ENCODE measurements at regions of chr4 and their contacts with region 1.

Region 1: DNA sequence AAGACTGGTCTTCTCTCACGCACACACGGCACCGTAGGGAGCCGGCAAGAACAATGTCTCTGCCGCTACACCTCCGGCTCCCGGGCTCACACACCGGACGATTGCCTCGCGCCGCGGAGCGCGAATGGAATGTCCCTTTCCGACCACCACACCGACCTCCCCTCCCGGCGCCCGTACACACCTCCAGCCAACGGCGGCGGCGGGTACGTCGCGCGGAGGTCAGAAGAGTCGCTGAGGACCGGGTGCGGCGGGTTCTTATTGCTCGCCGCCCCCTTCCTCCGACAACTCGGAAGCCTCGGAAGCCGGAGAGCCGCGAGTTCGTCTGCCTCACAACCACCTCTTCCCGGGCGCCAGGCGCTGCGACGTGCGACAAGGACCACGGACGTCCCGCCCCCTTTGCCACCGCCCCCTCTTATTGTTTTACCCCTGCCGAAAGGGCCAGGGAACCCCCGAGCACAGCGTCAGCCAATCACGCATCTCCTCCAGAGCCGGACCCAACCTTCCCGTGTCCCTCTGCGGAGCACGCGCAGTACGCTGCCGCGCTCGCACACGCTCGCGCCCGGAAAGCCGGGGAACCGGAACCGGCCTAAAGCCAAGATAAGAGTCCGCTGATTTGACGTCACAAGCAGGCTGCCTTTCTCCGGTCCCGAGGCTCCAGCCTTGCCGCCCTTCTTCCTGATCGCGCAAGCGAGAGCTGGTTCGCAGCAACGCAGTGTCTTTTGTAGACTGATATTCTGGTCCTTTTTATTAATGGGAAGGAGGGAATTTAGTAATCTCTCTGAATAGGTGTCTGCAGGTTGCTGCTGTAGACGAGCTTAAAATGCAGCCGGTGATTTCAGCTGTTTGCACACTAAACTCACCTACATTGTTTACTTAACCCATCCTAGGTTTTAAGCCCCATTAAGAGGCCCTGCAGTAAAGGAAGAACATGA is at the start of gene G3BP2:
- DNase-seq: peak; percentile 92 to 100
- ATAC-seq: peak; percentile 92 to 98 (median 94)
- H3K4me3 ChIP-seq: peak within 1 kb of the TSS; percentile 74
- H3K4me3 Mint-ChIP-seq: peak within 1 kb of the TSS; percentile 98
- H3K27ac ChIP-seq: peak within 1 kb of the TSS; percentile 94
- H3K27ac Mint-ChIP-seq: peak within 1 kb of the TSS; percentile 98 to 99
- H3K4me1 ChIP-seq: peaks cover 6% of the 10 kb centered on the region
- H3K4me1 Mint-ChIP-seq: peaks cover 48 to 54% of the 10 kb centered on the region in 2 donors
- H3K27me3 ChIP-seq: no peaks in the 10 kb centered on the region
- H3K27me3 Mint-ChIP-seq: no peaks in the 10 kb centered on the region
- CTCF ChIP-seq: no peak
- total RNA-seq, gene G3BP2: 204 to 233 (median 214) TPM

Region 2: DNA sequence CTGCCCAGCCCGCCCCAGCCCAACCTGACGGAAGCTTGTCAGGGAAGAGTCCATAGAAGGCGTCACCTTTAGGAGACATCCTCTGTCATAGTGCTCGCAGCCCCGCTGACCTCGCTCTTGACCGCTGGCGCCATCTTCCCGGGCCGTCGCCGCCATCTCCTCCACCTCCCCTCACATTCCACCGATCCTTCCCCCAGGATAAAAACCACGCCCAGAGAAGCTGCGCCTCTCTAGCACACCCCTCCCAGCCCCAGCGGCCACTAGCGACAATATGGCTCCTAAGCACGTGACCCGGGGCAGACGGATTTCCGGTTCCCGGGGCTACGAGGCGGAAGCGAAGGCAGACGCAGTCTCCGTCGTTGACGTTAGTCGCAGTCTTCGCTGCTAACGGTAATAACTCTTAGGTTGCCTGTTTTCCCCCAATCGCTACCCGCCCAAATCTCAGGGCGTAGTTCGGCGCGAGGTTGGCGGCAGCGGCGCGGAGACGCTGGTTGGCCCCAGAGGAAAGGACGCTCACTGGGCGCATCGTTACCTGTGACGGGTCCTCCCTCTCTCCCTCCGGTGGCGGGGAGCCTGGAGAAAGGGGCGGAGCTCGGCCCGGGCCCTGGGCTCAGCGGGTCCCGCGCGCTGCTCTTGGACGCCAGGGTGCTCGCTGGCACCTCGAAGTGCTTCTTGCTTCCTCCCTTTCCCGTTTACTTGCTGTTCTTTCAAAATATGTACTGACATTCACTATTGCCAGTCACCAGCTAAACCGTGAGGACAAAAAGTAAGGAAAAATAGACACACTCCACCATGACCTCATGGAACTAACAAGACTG is 159.0 kb before region 1 on chr4 and contains the starts of genes RCHY1 and THAP6:
- intact Hi-C with region 1: loop called (anchors 1 kb)
- DNase-seq: peak; percentile 89 to 97
- ATAC-seq: peak; percentile 80 to 91 (median 87)
- H3K4me3 ChIP-seq: peak within 1 kb of the TSS; percentile 95
- H3K4me3 Mint-ChIP-seq: no peak within 1 kb of the TSS
- H3K27ac ChIP-seq: peak within 1 kb of the TSS; percentile 98
- H3K27ac Mint-ChIP-seq: no peak within 1 kb of the TSS
- H3K4me1 ChIP-seq: peaks cover 20% of the 10 kb centered on the region
- H3K4me1 Mint-ChIP-seq: peaks cover 7 to 37% of the 10 kb centered on the region in 2 donors
- H3K27me3 ChIP-seq: no peaks in the 10 kb centered on the region
- H3K27me3 Mint-ChIP-seq: no peaks in the 10 kb centered on the region
- CTCF ChIP-seq: no peak
- total RNA-seq, gene RCHY1: 38.7 to 52.4 (median 45.3) TPM
- total RNA-seq, gene THAP6: 20.2 to 24.1 (median 21.8) TPM

Region 3: GRCh38 chr4:75630174-75630936 is 42.9 kb before region 1 on chr4 and contains the start of gene CDKL2:
- intact Hi-C with region 1: loop called (anchors 2 kb)
- DNase-seq: peak; percentile 88 to 96
- ATAC-seq: peak; percentile 98 to 99 (median 99)
- H3K4me3 ChIP-seq: peak within 1 kb of the TSS; percentile 48
- H3K4me3 Mint-ChIP-seq: peak within 1 kb of the TSS; percentile 95
- H3K27ac ChIP-seq: no peak within 1 kb of the TSS
- H3K27ac Mint-ChIP-seq: peak within 1 kb of the TSS; percentile 68 to 81
- H3K4me1 ChIP-seq: peaks cover 12% of the 10 kb centered on the region
- H3K4me1 Mint-ChIP-seq: peaks cover 7 to 12% of the 10 kb centered on the region in 2 donors
- H3K27me3 ChIP-seq: no peaks in the 10 kb centered on the region
- H3K27me3 Mint-ChIP-seq: peaks cover 0 to 8% of the 10 kb centered on the region in 2 donors
- CTCF ChIP-seq: no peak
- total RNA-seq, gene CDKL2: 0.19 to 0.63 (median 0.32) TPM

Region 4: DNA sequence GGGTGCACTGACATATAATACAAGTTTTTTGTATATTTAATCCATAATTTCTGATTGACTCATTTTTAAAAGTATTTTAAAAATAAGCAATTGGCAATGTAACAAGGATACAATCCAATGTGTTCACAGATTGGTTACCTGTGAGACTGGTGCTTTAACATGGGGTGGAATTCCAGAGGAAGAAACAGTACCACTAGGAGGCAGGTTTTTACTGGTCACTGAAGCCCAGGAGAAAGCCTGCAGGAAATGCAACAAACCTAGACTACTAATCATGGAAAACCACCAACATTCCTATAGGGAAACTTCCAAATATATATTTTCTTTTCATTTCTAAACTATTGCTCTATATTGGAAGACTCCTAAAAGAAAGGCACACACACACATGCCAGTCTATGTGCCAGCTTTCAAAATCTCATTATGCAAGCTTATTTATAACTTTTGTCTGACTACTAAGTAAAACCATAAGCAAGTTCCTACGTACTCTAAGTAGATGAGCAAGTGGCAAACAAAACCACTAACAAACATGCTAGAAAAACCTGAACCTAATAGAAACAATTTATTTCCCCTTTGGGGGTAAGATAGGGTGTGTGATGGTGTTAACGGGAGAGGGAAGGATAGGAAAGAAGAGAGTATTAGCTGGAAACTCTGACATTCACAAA is 19.3 kb before region 1 on chr4:
- intact Hi-C with region 1: no loop called
- DNase-seq: peak in 1 of 2 donors; percentile 42
- ATAC-seq: peak in 2 of 3 donors; percentile 24 to 46
- H3K4me3 ChIP-seq: no peak overlapping the region
- H3K4me3 Mint-ChIP-seq: no peak overlapping the region
- H3K27ac ChIP-seq: no peak overlapping the region
- H3K27ac Mint-ChIP-seq: peak overlapping the region; percentile 35 to 50
- H3K4me1 ChIP-seq: no peaks in the 10 kb centered on the region
- H3K4me1 Mint-ChIP-seq: peaks cover 18 to 24% of the 10 kb centered on the region in 2 donors
- H3K27me3 ChIP-seq: no peaks in the 10 kb centered on the region
- H3K27me3 Mint-ChIP-seq: no peaks in the 10 kb centered on the region
- CTCF ChIP-seq: peak; percentile 37

Region 5: DNA sequence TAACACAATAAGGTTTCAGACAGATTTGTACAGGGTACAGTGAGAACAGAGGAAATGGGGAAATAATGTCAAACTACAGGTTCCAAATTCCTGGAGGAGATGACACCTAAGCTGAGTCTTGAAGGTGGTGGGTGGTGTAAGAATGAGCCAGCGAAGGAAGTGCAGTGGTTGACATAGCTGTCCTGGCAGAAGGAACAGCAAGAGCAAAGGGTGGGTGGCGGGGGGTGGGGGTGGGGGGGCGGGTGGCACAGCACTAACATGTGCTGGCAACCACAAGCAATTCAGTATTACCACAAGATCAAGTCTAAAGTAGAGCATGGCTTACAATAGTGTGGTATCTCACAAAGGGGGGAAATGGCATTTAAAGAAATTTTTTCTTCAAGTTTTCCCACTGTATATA is 13.1 kb after region 1 on chr4:
- intact Hi-C with region 1: loop called (anchors 2 kb)
- DNase-seq: peak in 1 of 2 donors; percentile 65
- ATAC-seq: peak; percentile 77 to 90 (median 90)
- H3K4me3 ChIP-seq: no peak overlapping the region
- H3K4me3 Mint-ChIP-seq: peak overlapping the region; percentile 62
- H3K27ac ChIP-seq: peak overlapping the region; percentile 60
- H3K27ac Mint-ChIP-seq: peak overlapping the region; percentile 57 to 69
- H3K4me1 ChIP-seq: peaks cover 27% of the 10 kb centered on the region
- H3K4me1 Mint-ChIP-seq: peaks cover 26 to 36% of the 10 kb centered on the region in 2 donors
- H3K27me3 ChIP-seq: no peaks in the 10 kb centered on the region
- H3K27me3 Mint-ChIP-seq: no peaks in the 10 kb centered on the region
- CTCF ChIP-seq: no peak

Region 6: GRCh38 chr4:75708218-75708691 is 35.0 kb after region 1 on chr4:
- intact Hi-C with region 1: loop called (anchors 5 kb)
- DNase-seq: peak in 1 of 2 donors; percentile 77
- ATAC-seq: peak; percentile 84 to 97 (median 85)
- H3K4me3 ChIP-seq: no peak overlapping the region
- H3K4me3 Mint-ChIP-seq: no peak overlapping the region
- H3K27ac ChIP-seq: no peak overlapping the region
- H3K27ac Mint-ChIP-seq: no peak overlapping the region
- H3K4me1 ChIP-seq: no peaks in the 10 kb centered on the region
- H3K4me1 Mint-ChIP-seq: no peaks in the 10 kb centered on the region
- H3K27me3 ChIP-seq: no peaks in the 10 kb centered on the region
- H3K27me3 Mint-ChIP-seq: no peaks in the 10 kb centered on the region
- CTCF ChIP-seq: peak; percentile 72

Region 7: DNA sequence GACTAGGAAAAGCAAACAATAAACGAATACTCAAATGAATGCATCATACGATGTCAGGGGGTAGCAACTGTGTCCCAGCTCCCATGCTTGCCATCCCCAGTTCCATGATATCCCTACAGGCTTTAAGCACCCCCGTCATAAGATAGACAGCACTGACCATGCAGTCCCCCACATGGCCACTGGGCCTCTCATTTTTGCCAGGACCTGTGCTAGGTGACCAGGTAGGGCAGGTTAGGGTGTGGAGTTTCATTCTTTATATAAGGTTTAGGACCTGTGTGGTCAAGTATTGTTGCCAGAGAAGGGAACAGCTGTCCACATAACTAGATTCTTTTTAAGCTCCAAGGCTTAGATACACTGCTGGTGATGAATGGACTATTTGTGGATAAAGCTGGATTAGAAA is 219.2 kb after region 1 on chr4:
- intact Hi-C with region 1: no loop called
- DNase-seq: no peak
- ATAC-seq: no peak
- H3K4me3 ChIP-seq: no peak overlapping the region
- H3K4me3 Mint-ChIP-seq: no peak overlapping the region
- H3K27ac ChIP-seq: no peak overlapping the region
- H3K27ac Mint-ChIP-seq: no peak overlapping the region
- H3K4me1 ChIP-seq: no peaks in the 10 kb centered on the region
- H3K4me1 Mint-ChIP-seq: no peaks in the 10 kb centered on the region
- H3K27me3 ChIP-seq: no peaks in the 10 kb centered on the region
- H3K27me3 Mint-ChIP-seq: peaks cover 4 to 7% of the 10 kb centered on the region in 2 donors
- CTCF ChIP-seq: no peak